Aorta (tissue), 5 donors: ENCODE measurements at regions of chr3 and their contacts with region 1.

Region 1: DNA sequence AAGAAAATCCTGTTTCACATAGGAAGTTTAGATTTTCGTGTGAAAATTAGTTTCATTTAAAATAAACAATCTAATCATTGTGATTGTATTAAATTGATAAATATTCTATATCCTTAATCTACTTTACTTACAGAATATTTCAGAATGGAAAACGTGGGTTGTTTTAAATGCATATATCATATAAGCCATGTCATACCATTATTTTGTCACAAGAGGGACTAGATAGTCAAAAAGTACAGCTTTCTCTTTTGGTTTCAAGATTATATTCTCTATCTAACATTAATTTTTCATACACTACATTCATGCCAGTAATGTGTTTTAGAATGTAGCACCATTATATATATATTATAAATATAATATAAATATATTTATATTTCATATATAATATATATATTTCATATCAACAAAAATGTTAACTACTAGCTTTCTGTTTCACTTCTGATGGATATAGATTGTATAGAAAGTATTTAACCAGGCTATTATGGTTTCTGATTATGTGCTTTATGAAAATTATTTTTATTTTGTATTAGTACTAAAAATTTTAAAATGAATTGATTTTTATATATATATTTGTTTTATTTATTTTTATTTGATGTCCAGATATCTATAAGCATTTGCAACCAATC is 45.3 kb downstream of the OSTN start:
- DNase-seq: no peak
- ATAC-seq: no peak
- H3K4me3 ChIP-seq: no peak overlapping the region
- H3K27ac ChIP-seq: no peak overlapping the region
- H3K4me1 ChIP-seq: no peaks in the 10 kb centered on the region
- H3K27me3 ChIP-seq: no peaks in the 10 kb centered on the region

Region 2: DNA sequence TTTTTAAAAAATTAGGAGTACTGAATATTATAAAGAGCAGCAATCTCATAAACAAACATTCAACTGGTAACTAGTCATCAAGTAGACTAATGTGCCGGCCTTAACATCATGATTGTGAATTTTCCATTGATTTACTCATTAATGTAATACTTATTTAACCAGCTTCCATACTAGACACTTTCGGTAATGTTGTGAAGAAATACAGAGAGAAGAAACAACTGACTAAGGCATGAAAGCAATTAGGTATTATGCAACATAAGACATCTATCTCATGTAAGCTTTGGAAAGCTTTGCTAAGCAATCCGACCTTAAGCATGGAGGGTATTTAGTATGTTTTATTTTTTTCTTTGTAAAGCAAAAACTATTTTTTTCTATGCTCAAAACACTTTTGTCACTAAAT is 622.4 kb before region 1 on chr3:
- intact Hi-C with region 1: loop called in 1 of 2 experiments (anchors 10 kb)
- DNase-seq: no peak
- ATAC-seq: no peak
- H3K4me3 ChIP-seq: no peak overlapping the region
- H3K27ac ChIP-seq: no peak overlapping the region
- H3K4me1 ChIP-seq: no peaks in the 10 kb centered on the region
- H3K27me3 ChIP-seq: no peaks in the 10 kb centered on the region

Region 3: GRCh38 chr3:191869738-191870415 is 625.5 kb after region 1 on chr3:
- intact Hi-C with region 1: no loop called
- DNase-seq: no peak
- ATAC-seq: no peak
- H3K4me3 ChIP-seq: no peak overlapping the region
- H3K27ac ChIP-seq: no peak overlapping the region
- H3K4me1 ChIP-seq: no peaks in the 10 kb centered on the region
- H3K27me3 ChIP-seq: no peaks in the 10 kb centered on the region